ENCODE measurements at regions of chr18 and their contacts with region 1.

Region 1: GRCh38 chr18:32552421-32553030 is 81.8 kb upstream of the GAREM1 start:
- DNase-seq: peak; percentile 51 to 60 (median 58)
- H3K4me3 ChIP-seq: no peak overlapping the region
- H3K4me3 Mint-ChIP-seq: no peak overlapping the region
- H3K27ac ChIP-seq: no peak overlapping the region
- H3K27ac Mint-ChIP-seq: no peak overlapping the region
- H3K4me1 ChIP-seq: no peaks in the 10 kb centered on the region
- H3K4me1 Mint-ChIP-seq: peaks cover 0 to 2% (median under 1%) of the 10 kb centered on the region in 4 donors
- H3K27me3 ChIP-seq: no peaks in the 10 kb centered on the region
- H3K27me3 Mint-ChIP-seq: peaks cover 3 to 4% of the 10 kb centered on the region in 2 donors

Region 2: DNA sequence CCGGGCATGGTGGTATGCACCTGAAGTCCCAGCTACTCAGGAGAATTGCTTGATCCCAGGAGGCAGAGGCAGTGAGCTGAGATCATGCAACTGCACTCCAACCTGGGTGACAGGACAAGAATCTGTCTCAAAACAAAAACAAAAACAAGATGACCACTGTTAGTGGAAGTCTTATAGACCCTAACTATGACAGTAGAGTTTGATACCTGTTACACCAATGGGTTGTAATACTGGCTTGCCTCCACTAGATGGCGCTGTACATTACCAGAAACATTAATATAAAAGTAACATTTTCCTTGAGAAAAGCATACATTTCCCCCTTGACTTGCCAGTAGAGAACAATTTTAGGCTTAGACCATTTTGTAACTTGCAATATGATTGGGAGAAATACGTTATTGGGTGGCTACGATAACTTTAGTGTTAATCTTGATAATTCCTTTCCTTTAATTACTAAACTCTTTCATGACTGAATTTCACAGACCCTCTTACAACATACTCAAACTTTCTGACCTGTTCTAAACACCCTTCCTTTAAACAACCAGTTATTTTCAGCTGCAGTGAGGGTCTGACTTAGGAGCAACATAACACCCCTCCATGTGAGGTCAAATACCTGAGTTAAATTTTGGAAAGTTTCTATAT is 811.3 kb before region 1 on chr18:
- CTCF ChIA-PET with region 1: no interaction called
- POLR2A ChIA-PET with region 1: no interaction called
- intact Hi-C with region 1: loop called (anchors 5 kb)
- DNase-seq: peak; percentile 26 to 50 (median 35)
- H3K4me3 ChIP-seq: no peak overlapping the region
- H3K4me3 Mint-ChIP-seq: no peak overlapping the region
- H3K27ac ChIP-seq: no peak overlapping the region
- H3K27ac Mint-ChIP-seq: no peak overlapping the region
- H3K4me1 ChIP-seq: no peaks in the 10 kb centered on the region
- H3K4me1 Mint-ChIP-seq: no peaks in the 10 kb centered on the region
- H3K27me3 ChIP-seq: no peaks in the 10 kb centered on the region
- H3K27me3 Mint-ChIP-seq: peaks cover 0 to 1% of the 10 kb centered on the region in 2 donors

Region 3: GRCh38 chr18:32158108-32158624 is 394.4 kb before region 1 on chr18:
- CTCF ChIA-PET with region 1: interaction called, 216 read pairs
- POLR2A ChIA-PET with region 1: interaction called, 5 read pairs
- intact Hi-C with region 1: loop called (anchors 1 kb)
- DNase-seq: peak; percentile 68 to 74 (median 72)
- H3K4me3 ChIP-seq: peak overlapping the region in 1 of 2 donors; percentile 13
- H3K4me3 Mint-ChIP-seq: peak overlapping the region; percentile 50 to 87 (median 76)
- H3K27ac ChIP-seq: no peak overlapping the region
- H3K27ac Mint-ChIP-seq: peak overlapping the region in 4 of 7 donors; percentile 1 to 14 (median 3)
- H3K4me1 ChIP-seq: peaks cover 10% of the 10 kb centered on the region
- H3K4me1 Mint-ChIP-seq: peaks cover 4 to 6% (median 5%) of the 10 kb centered on the region in 4 donors
- H3K27me3 ChIP-seq: no peaks in the 10 kb centered on the region
- H3K27me3 Mint-ChIP-seq: peaks cover 4% of the 10 kb centered on the region in 2 donors

Region 4: DNA sequence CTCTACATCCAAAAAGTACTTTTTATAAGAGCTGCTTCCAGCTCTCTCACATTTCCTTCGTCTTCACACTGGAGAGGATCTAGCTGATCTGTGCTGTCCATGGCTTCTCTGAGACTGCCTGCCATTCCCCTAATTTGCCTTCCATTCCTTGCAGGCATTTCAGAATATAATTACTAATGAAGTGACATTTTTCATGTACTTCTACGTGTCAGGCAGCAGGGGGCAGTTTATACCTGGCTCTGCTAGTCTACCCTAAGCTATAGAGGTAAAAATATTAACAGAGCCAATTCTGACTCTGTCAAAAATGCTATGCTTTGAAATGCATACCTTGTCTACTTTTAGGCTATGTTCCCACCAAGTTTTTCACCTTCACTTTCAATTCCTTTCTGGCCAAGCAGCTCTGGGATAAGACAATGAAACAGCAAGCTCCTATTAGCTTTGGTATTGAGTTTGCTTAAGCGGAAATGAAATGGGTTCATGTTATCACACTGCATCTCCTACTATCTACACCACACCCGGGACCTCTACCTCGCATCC is 280.8 kb before region 1 on chr18:
- CTCF ChIA-PET with region 1: interaction called, 11 read pairs
- POLR2A ChIA-PET with region 1: no interaction called
- intact Hi-C with region 1: loop called (anchors 1 kb)
- DNase-seq: peak in 4 of 5 donors; percentile 6 to 17 (median 11)
- H3K4me3 ChIP-seq: no peak overlapping the region
- H3K4me3 Mint-ChIP-seq: no peak overlapping the region
- H3K27ac ChIP-seq: no peak overlapping the region
- H3K27ac Mint-ChIP-seq: no peak overlapping the region
- H3K4me1 ChIP-seq: no peaks in the 10 kb centered on the region
- H3K4me1 Mint-ChIP-seq: no peaks in the 10 kb centered on the region
- H3K27me3 ChIP-seq: no peaks in the 10 kb centered on the region
- H3K27me3 Mint-ChIP-seq: peaks cover 10 to 13% of the 10 kb centered on the region in 2 donors

Region 5: DNA sequence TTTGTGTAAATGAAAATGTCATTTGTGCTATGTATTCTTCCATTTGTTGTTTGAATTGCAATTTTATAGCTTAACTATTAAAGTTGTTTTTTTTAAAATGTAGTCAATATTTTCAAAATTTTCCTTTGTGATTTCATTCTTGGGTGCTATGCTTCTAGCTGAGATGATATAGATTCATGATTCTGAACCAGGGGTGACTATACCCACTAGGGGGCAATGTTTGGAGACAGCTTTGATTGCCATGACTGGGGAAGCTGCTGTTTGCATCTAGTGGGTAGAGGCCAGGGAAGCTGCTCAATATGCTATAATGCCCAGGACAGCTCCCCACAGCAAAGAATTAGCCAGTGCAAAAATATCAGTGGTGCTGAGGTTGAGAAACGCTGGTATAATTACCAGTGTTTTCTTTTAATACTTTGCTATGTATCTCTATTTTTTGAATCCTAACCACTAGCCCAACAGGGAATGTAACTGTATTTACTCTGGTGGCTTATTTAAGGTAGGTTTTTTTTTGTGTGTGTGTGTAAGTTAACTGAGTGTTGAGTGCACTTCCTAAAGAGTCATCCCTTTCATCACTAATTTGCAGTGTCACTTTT is 262.9 kb before region 1 on chr18:
- CTCF ChIA-PET with region 1: interaction called, 5 read pairs
- POLR2A ChIA-PET with region 1: no interaction called
- intact Hi-C with region 1: loop called (anchors 1 kb)
- DNase-seq: peak in 4 of 5 donors; percentile 6 to 22 (median 14)
- H3K4me3 ChIP-seq: no peak overlapping the region
- H3K4me3 Mint-ChIP-seq: no peak overlapping the region
- H3K27ac ChIP-seq: no peak overlapping the region
- H3K27ac Mint-ChIP-seq: no peak overlapping the region
- H3K4me1 ChIP-seq: no peaks in the 10 kb centered on the region
- H3K4me1 Mint-ChIP-seq: no peaks in the 10 kb centered on the region
- H3K27me3 ChIP-seq: no peaks in the 10 kb centered on the region
- H3K27me3 Mint-ChIP-seq: peaks cover 4 to 7% of the 10 kb centered on the region in 2 donors

Region 6: GRCh38 chr18:32566960-32567359 is 14.4 kb after region 1 on chr18:
- CTCF ChIA-PET with region 1: interaction called, 32 read pairs
- POLR2A ChIA-PET with region 1: no interaction called
- intact Hi-C with region 1: no loop called
- DNase-seq: no peak
- H3K4me3 ChIP-seq: no peak overlapping the region
- H3K4me3 Mint-ChIP-seq: no peak overlapping the region
- H3K27ac ChIP-seq: no peak overlapping the region
- H3K27ac Mint-ChIP-seq: no peak overlapping the region
- H3K4me1 ChIP-seq: no peaks in the 10 kb centered on the region
- H3K4me1 Mint-ChIP-seq: no peaks in the 10 kb centered on the region
- H3K27me3 ChIP-seq: no peaks in the 10 kb centered on the region
- H3K27me3 Mint-ChIP-seq: peaks cover 0 to 4% of the 10 kb centered on the region in 2 donors

Measured in CD4-positive, alpha-beta memory T cell (primary cell).